Mammary epithelial cell (primary cell): ENCODE measurements at regions of chr10 and their contacts with region 1.

Region 1: DNA sequence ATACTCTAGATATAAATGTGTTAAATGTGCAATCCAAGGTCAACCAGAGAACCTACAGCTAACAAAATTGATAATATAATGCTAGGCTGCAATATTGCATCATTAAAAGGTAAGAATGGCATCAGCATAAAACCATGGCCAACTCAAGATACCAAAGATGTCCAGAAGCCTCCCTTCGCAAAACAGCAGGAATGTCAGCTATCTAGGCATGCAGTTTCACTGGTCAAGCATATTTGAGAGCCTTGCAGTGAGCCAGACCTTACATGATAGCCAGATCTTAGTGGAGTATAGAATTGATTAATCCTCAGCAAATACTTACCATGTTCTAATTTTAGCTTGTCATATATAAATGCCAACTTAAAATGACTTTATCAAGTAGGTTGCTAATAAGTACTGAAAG is 138.8 kb downstream of the ZEB1 start:
- DNase-seq: no peak
- H3K4me3 ChIP-seq: no peak overlapping the region
- H3K27ac ChIP-seq: no peak overlapping the region
- H3K4me1 ChIP-seq: no peaks in the 10 kb centered on the region
- H3K27me3 ChIP-seq: peaks cover 2% of the 10 kb centered on the region
- CTCF ChIP-seq: no peak

Region 2: DNA sequence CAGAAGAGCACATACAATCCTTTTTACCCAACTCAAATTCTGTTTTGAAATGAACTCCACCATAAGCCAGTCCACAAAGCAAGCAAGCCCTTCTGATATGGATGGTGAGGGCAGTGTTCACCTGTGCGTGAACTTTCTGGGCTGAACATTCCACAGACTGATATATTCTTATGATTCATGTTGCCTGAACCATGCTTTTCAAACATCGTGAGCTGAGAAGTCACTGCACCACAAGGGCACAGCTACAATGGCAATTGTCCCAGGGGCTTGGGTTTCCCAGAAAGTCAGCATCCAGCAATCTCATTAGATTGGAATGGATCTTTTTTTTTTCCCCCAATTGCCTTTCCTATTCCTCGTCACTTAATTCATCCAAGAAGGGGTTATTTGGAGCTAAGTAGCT is 339.3 kb before region 1 on chr10:
- CTCF ChIA-PET with region 1: no interaction called
- dilution Hi-C with region 1: no loop called
- in situ Hi-C with region 1: no loop called
- intact Hi-C with region 1: no loop called
- DNase-seq: peak; percentile 72
- H3K4me3 ChIP-seq: no peak overlapping the region
- H3K27ac ChIP-seq: no peak overlapping the region
- H3K4me1 ChIP-seq: peaks cover 5% of the 10 kb centered on the region
- H3K27me3 ChIP-seq: no peaks in the 10 kb centered on the region
- CTCF ChIP-seq: no peak

Region 3: GRCh38 chr10:31479752-31480151 is 21.9 kb after region 1 on chr10:
- CTCF ChIA-PET with region 1: no interaction called
- dilution Hi-C with region 1: no loop called
- in situ Hi-C with region 1: no loop called
- intact Hi-C with region 1: loop called (anchors 2 kb)
- DNase-seq: no peak
- H3K4me3 ChIP-seq: no peak overlapping the region
- H3K27ac ChIP-seq: no peak overlapping the region
- H3K4me1 ChIP-seq: no peaks in the 10 kb centered on the region
- H3K27me3 ChIP-seq: peaks cover 4% of the 10 kb centered on the region
- CTCF ChIP-seq: no peak